Posterior vena cava (tissue), 2 donors: ENCODE measurements at regions of chr21 and their contacts with region 1.

Region 1: DNA sequence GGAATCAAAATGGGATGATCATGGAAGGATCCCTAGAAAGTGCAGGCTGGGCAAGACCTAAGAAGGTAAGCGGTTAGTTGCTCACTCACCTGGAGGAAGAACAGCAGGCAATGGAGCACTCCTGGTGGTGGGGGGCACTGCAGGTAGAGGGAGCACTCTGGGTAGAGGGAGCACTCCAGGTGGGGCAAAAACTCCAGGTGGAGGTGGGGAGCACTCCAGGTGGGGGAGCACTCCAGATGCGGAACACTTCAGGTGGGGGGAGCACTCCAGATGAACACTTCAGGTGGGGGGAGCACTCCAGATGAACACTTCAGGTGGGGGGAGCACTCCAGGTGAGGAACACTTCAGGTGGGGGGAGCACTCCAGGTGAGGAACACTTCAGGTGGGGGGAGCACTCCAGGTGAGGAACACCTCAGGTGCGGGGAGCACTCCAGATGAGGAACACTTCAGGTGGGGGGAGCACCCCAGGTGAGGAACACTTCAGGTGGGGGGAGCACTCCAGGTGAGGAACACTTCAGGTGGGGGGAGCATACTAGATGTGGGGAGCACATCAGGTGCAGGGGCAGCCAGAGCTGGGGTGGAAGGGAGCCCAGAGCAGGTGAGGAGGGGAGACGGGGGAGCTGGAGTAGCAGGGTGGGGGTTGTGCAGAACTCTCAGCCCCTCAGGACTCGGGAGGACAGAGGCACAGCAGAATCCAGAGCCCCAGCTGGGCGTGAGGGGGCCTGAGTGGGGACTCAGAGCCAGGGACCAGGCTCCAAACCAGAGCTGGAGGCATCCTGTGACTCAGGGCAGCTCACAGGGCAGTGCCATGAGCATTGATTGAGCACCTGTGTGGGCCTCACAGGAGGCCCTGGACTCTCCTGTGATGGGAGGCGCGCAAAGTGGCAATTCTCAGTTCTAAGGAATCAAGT is 37.7 kb upstream of the COL6A1 start:
- DNase-seq: no peak

Region 2: DNA sequence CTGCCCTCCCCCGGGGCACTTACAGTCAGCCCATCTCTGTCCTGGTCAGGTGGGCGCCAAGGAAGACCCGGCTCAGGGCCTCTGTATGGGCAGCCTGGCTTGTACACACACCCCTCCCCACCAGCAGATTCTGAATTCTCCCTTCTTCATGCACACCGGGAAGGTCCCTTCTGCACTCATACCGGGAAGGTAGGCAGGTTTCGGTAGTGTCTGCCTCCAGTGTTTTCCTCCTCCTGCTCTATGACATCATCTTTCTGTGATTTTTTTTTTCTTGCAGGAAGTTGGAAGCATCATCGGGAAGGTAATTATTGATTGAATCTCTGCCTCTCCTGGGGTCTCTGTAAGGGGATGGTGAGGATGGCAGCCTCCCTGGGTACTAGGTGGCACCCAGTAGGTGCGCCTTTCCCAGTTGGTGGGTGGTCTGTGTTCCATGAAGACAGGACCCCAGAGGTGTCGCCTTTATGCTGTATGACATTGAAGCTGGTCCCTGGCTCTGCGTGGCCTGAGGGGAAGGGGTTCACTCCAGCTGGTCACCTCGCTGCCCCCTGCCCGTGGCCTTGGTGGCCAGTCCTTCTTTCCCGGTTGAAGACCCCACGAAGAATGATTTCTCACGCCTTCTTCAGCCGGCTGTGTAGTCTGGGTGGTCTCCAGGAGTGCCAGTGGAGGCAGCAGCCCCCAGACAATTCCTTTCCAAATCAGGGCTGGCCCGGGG is 44.4 kb before region 1 on chr21:
- intact Hi-C with region 1: loop called in 1 of 2 experiments (anchors 1 kb)
- DNase-seq: no peak